Thyroid gland (tissue), 4 donors: ENCODE measurements at regions of chr20 and their contacts with region 1.

Region 1: GRCh38 chr20:35146920-35147574 is at the start of gene EDEM2:
- DNase-seq: peak; percentile 92 to 93
- H3K4me3 ChIP-seq: peak within 1 kb of the TSS; percentile 7 to 93 (median 59)
- H3K27ac ChIP-seq: peak within 1 kb of the TSS; percentile 1 to 75 (median 74)
- H3K4me1 ChIP-seq: peaks cover 6 to 21% of the 10 kb centered on the region in 2 donors
- H3K27me3 ChIP-seq: no peaks in the 10 kb centered on the region
- CTCF ChIP-seq: peak in 1 of 6 experiments; percentile 26
- POLR2A ChIP-seq: peak in 1 of 2 donors; percentile 55
- total RNA-seq, gene EDEM2: 13.7 to 31.0 (median 25.0) TPM

Region 2: GRCh38 chr20:34970193-34970840 is 176.7 kb before region 1 on chr20:
- intact Hi-C with region 1: no loop called
- DNase-seq: no peak
- H3K4me3 ChIP-seq: no peak overlapping the region
- H3K27ac ChIP-seq: no peak overlapping the region
- H3K4me1 ChIP-seq: no peaks in the 10 kb centered on the region
- H3K27me3 ChIP-seq: no peaks in the 10 kb centered on the region
- CTCF ChIP-seq: no peak
- POLR2A ChIP-seq: no peak

Region 3: GRCh38 chr20:35207950-35208611 is 61.0 kb after region 1 on chr20:
- intact Hi-C with region 1: loop called (anchors 5 kb)
- DNase-seq: peak; percentile 80 to 89
- H3K4me3 ChIP-seq: no peak overlapping the region
- H3K27ac ChIP-seq: peak overlapping the region; percentile 4 to 47 (median 10)
- H3K4me1 ChIP-seq: no peaks in the 10 kb centered on the region
- H3K27me3 ChIP-seq: no peaks in the 10 kb centered on the region
- CTCF ChIP-seq: peak; percentile 52 to 93 (median 82)
- POLR2A ChIP-seq: no peak

Region 4: DNA sequence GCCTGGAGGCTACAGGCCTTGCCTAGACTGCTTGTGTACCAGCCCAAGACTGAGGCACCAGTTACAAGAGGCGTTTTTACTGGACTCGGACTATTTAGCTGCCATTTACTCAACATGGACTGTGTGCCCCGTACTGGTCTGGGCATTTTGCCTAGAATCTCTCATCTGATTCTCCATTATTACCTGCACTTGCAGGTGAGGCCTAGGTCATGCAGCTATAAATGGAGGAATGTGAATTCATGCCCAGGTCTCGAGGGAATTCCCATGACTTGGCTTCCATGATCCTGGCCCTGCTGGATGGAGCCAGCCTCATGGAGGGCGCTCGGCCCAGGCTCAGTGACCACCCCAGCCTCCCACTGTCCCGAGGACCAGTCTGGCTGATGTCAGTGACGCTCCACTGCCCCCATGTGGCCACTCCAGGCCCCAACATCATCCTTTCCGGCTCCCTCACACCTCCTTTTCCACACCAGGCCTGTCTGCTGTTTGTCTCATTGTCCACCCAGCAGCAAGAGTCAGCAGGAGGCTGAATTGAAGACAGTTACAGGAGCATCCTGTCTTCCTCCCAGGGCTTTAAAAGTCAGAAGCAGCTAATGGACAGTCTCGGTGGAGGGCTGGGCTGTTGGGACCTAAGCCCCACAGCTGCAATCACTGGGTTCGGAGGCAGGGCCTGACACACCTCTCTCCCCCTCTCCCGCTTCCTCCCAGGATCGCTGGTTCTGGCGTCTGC is 122.2 kb after region 1 on chr20:
- intact Hi-C with region 1: loop called (anchors 5 kb)
- DNase-seq: peak; percentile 69 to 76
- H3K4me3 ChIP-seq: no peak overlapping the region
- H3K27ac ChIP-seq: peak overlapping the region in 2 of 3 donors; percentile 3 to 45
- H3K4me1 ChIP-seq: peaks cover 5 to 10% of the 10 kb centered on the region in 2 donors
- H3K27me3 ChIP-seq: no peaks in the 10 kb centered on the region
- CTCF ChIP-seq: peak; percentile 38 to 84 (median 70)
- POLR2A ChIP-seq: no peak